HEK293 (cell line): ENCODE measurements at regions of chr2 and their contacts with region 1.

Region 1: DNA sequence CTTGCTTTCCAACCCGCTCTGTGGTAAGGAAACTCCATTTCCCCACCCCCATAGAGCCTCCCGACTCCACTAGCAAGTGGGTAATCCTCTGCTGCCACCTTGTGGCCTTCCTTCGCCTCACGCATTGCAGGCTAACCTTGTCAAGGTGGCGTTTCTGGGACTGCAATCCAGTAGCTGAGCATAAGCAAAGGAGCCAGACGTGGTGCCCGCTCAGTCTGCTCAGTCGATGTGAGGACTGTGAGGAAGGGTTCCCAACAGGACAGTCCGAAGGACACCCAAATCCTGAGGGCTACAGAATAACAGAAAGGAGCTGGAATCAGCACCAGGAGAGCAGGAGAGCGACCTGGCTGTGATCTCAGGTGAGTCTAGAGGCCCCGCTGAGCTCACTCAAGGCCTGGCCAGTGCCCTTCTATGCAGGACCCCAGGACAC is 144.2 kb downstream of the SUCLG1 start:
- H3K4me3 ChIP-seq: no peak overlapping the region
- H3K27ac ChIP-seq: no peak overlapping the region
- H3K4me1 ChIP-seq: no peaks in the 10 kb centered on the region
- CTCF ChIP-seq: peak; percentile 85

Region 2: GRCh38 chr2:84022810-84023431 is 292.0 kb before region 1 on chr2:
- CTCF ChIA-PET with region 1: interaction called, 14 read pairs
- POLR2A ChIA-PET with region 1: no interaction called
- H3K4me3 ChIP-seq: no peak overlapping the region
- H3K27ac ChIP-seq: no peak overlapping the region
- H3K4me1 ChIP-seq: no peaks in the 10 kb centered on the region
- CTCF ChIP-seq: peak; percentile 25; the same call in 1 of the 2 replicates

Region 3: DNA sequence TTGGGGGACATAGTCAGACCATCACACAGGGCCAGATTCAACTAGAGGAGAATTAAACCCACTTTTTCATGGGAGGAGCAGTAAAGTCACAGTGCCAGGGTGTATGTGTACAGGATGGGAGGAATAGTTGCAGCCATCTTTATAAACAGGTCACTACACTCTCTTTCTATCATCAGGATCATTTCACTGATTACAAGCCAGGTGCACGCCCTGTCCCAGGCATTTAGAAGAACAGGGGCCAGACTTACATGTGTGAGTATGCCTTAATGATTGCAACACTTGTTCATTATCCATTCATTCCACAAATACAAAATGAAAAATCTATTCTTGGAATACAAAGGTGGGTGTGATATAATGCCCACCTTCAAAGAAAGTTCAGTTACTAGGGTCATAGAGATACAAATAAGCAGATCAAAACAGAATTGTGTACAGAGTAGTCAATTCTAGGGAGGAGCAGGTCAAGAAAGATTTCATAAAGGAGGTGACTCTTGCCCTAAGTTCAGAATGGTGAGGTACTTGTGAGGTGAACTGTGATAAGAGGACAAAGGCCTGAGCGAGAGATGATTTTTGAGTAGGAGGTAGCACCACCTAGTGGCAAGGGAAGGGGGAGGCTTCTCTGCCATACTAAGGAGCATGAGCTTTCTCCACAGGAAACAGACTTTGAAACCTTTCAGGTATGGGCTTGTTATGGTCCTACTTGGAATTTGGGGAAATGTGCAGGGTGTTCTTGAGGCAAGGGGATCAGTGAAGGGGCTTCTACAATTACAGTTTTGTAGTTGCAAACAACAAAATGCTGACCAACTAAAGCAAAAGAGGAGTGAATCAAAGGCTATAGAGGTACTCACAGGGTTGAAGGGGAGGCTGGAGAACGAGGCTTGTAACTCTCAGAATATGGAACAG is 12.2 kb before region 1 on chr2:
- CTCF ChIA-PET with region 1: interaction called, 33 read pairs
- POLR2A ChIA-PET with region 1: no interaction called
- H3K4me3 ChIP-seq: no peak overlapping the region
- H3K27ac ChIP-seq: no peak overlapping the region
- H3K4me1 ChIP-seq: no peaks in the 10 kb centered on the region
- CTCF ChIP-seq: peak; percentile 65

Region 4: GRCh38 chr2:84395820-84396219 is 80.9 kb after region 1 on chr2:
- CTCF ChIA-PET with region 1: no interaction called
- POLR2A ChIA-PET with region 1: no interaction called
- H3K4me3 ChIP-seq: no peak overlapping the region
- H3K27ac ChIP-seq: no peak overlapping the region
- H3K4me1 ChIP-seq: no peaks in the 10 kb centered on the region
- CTCF ChIP-seq: no peak